Common myeloid progenitor, CD34-positive (primary cell): ENCODE measurements at regions of chr20 and their contacts with region 1.

Region 1: GRCh38 chr20:35303735-35304491 is 11.7 kb upstream of the FAM83C start:
- DNase-seq: peak; percentile 86 to 92 (median 89)
- H3K4me3 ChIP-seq: no peak overlapping the region
- H3K27ac ChIP-seq: no peak overlapping the region
- H3K4me1 ChIP-seq: peaks cover 0 to 27% (median 0%) of the 10 kb centered on the region in 4 experiments
- H3K27me3 ChIP-seq: no peaks in the 10 kb centered on the region

Region 2: DNA sequence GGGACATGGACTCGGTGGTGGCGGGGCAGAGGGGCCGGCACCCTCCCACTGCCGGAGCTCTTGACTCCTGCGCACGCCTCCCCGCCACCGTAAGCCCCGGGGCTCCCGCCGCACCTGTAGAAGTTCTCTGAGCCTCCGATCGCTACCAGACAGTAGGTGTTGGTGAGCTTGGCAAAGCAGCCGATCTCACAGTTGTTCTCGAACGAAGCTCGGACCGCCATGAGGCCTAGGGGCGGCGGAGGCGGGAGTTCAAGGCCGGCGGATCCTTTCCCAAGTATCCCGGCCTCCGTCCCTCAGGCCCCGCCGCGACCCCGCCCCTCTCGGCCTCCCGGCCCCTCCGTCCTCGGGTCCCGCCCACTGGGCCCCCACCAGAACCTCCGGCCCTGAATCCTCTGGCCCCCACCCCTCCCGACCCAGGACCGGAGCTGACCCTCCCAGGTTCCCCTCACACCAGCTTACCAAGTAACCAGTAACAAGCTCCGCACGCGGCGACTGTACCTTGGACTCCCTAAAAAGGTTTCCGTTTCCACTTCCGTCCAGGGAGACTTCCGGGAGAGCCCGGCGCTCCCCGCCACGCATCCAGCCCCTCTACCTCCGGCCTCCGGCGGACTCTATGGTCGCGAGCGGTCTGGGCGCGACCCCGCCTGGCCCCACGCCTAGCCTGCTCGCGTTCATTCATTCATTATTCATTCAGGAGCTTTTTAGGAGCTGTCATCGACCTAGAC is 19.5 kb before region 1 on chr20 and contains the start of gene EIF6:
- CTCF ChIA-PET with region 1: interaction called, 17 read pairs
- POLR2A ChIA-PET with region 1: interaction called, 3 read pairs
- DNase-seq: peak; percentile 72
- H3K4me3 ChIP-seq: peak within 1 kb of the TSS; percentile 21 to 90 (median 77)
- H3K27ac ChIP-seq: peak within 1 kb of the TSS; percentile 66 to 81
- H3K4me1 ChIP-seq: peaks cover 2 to 17% (median 14%) of the 10 kb centered on the region in 4 experiments
- H3K27me3 ChIP-seq: no peaks in the 10 kb centered on the region

Region 3: DNA sequence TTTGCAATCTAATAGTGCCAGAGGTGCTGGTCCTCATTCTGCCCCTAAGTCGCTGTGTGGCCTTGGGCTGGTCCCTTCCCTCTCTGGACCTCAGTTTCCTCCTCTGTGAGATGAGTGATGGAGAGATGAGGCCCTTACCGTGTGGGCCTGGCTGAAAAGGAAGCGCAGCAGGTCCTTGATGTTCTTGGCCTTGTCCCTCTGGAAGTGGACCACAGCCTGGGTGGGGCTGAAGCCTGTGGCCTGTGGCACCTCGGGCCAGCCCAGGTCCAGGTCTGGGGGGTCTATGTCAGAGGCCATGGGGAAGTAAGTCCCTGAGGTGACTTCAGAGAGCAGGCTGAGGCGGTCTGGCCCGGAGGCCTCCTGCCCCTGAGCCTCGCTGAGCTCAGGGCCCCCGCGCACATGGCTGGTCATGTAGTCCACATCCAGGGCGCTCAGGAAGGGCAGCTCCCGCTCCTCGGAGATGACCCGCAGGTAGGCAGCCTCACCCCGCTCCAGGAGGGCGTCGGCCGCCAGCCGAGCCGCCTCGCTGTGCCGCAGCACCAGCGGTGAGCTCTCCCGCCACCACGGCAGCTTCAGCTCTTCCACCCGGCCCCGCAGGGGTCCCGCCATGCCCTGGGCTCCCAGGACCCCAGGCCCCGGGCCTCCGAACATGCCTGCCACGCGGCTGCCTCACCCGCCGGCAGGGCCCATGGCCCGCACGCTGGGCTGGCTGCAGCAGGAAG is 12.1 kb before region 1 on chr20:
- CTCF ChIA-PET with region 1: interaction called, 19 read pairs
- POLR2A ChIA-PET with region 1: no interaction called
- DNase-seq: no peak
- H3K4me3 ChIP-seq: no peak overlapping the region
- H3K27ac ChIP-seq: no peak overlapping the region
- H3K4me1 ChIP-seq: peaks cover 0 to 2% (median 0%) of the 10 kb centered on the region in 4 experiments
- H3K27me3 ChIP-seq: no peaks in the 10 kb centered on the region

Region 4: GRCh38 chr20:35318502-35319157 is 14.7 kb after region 1 on chr20:
- CTCF ChIA-PET with region 1: interaction called, 16 read pairs
- POLR2A ChIA-PET with region 1: no interaction called
- DNase-seq: no peak
- H3K4me3 ChIP-seq: no peak overlapping the region
- H3K27ac ChIP-seq: no peak overlapping the region
- H3K4me1 ChIP-seq: peaks cover 0 to 16% (median 13%) of the 10 kb centered on the region in 4 experiments
- H3K27me3 ChIP-seq: no peaks in the 10 kb centered on the region

Region 5: DNA sequence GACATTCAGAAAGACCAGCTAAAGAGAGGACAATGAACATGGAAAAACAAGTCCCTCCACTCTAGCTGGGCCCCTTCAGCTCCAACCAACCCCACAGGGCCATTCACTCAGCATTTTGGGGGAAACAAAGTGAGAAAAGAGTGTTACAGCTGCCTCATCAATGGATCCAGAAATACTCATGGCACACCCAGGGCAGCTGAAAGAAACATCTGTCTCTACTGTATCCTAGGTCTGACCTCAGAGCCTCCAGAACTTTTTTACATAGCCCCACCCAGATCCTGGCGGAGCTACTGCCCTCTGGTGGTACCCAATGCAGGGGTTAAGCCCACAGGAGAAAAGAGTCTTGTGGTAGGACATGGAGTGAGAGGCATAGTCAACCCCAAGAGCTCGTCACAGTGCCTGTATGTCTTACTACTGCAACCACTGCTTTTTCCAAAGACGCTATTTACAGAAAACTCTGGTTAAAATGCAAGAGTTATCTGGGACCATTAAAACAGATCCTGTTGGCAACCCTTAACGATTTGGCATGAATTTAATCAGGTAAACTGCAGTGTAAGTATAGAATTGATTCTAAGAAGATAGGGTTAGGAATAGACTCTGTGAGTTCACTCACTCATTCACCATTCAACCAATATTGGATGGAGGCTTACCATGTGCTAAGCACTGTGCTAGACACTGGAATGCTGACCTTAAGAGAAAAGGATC is 25.7 kb after region 1 on chr20:
- CTCF ChIA-PET with region 1: interaction called, 63 read pairs
- POLR2A ChIA-PET with region 1: interaction called, 3 read pairs
- DNase-seq: peak; percentile 42 to 70 (median 58)
- H3K4me3 ChIP-seq: no peak overlapping the region
- H3K27ac ChIP-seq: no peak overlapping the region
- H3K4me1 ChIP-seq: peaks cover 0 to 5% (median 0%) of the 10 kb centered on the region in 4 experiments
- H3K27me3 ChIP-seq: no peaks in the 10 kb centered on the region

Region 6: DNA sequence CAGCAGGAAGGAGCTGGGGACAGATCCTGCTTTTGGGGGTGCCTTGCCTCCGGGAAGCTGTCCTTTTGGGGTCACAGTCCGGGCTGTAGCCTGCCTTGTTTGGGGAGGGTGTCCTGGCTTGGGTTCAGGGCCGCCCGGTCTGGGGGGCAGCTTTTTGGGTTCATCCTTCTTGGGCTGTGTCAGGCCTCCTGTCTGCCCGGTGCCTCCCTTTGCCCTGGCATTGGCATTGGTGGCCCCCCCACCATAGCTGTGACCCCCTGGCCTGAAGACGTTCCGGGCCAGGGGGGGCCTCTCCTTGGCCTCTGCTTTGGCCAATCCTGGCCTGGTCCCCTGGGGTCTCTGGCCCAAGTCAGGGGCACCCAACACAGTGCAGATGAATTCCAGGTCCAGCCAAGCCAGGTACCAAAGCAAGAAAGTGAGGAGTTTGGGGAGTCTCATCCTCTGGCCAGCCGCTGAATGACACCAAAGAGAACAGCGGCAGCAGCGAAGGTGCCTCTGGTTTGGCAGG is 133.6 kb after region 1 on chr20:
- CTCF ChIA-PET with region 1: interaction called, 12 read pairs
- POLR2A ChIA-PET with region 1: no interaction called
- DNase-seq: no peak
- H3K4me3 ChIP-seq: no peak overlapping the region
- H3K27ac ChIP-seq: no peak overlapping the region
- H3K4me1 ChIP-seq: peaks cover 0 to 1% (median 0%) of the 10 kb centered on the region in 4 experiments
- H3K27me3 ChIP-seq: no peaks in the 10 kb centered on the region